Activated B cell treated with CpG ODN at 0.5 μM for 24 hours (primary cell): ENCODE measurements at regions of chr2 and their contacts with region 1.

Region 1: GRCh38 chr2:241950413-241951315 is 81.1 kb downstream of the RTP5 start:
- DNase-seq: peak; percentile 53
- ATAC-seq: peak; percentile 62
- H3K4me3 Mint-ChIP-seq: no peak overlapping the region
- H3K27ac Mint-ChIP-seq: no peak overlapping the region
- H3K4me1 Mint-ChIP-seq: peaks cover 9% of the 10 kb centered on the region
- H3K27me3 Mint-ChIP-seq: no peaks in the 10 kb centered on the region
- CTCF ChIP-seq: peak; percentile 31

Region 2: GRCh38 chr2:241965931-241966412 is 15.3 kb after region 1 on chr2:
- CTCF ChIA-PET with region 1: interaction called, 20 read pairs
- POLR2A ChIA-PET with region 1: interaction called, 3 read pairs
- intact Hi-C with region 1: no loop called
- DNase-seq: peak; percentile 49
- ATAC-seq: peak; percentile 77
- H3K4me3 Mint-ChIP-seq: peak overlapping the region; percentile 75
- H3K27ac Mint-ChIP-seq: peak overlapping the region; percentile 79
- H3K4me1 Mint-ChIP-seq: peaks cover 67% of the 10 kb centered on the region
- H3K27me3 Mint-ChIP-seq: no peaks in the 10 kb centered on the region
- CTCF ChIP-seq: no peak